Motor neuron (in vitro differentiated cells): ENCODE measurements at regions of chr4 and their contacts with region 1.

Region 1: DNA sequence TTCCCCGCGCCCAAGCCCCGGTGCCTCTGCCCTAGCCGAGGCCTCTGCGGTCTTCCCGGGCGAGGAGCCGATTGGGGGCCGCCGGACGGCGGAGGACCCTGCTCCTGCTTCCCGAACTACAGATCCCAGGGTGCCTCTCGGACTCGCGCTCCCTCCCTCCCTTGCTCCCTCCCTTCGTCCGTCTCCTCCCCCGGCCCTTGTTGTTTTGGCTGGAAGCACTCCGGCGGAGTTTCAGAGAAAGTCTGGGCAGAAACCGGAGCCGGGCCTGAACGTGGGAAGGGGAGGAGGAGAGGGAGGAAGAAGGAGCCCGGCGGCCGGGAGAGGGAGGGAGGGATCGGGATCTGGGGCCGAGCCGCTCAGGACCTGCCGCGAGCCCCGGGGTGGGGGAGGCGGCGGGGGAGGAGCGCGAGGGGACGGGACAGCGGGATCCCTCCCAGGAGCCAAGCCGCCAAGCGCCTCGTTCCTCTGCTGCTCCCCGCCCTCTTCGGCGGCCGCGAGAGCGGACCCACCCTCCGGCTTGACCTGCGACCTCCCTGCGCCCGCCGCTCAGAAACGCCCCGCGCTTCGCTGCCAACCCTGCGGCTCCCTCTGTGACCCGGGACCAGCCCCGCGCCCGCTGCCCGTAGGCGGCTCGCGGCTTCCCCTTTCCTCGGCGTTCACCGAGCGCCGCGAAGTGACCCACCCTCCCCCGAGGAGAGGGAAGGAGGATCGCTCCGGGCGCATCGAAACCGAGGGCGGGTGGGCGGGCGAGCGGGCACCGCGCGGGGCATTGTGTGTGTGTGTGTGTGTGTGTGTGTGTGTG is 496 bp upstream of the GAB1 start:
- ATAC-seq: peak; percentile 71 to 82 (median 78)
- H3K4me3 ChIP-seq: peak overlapping the region; percentile 71 to 97 (median 88)
- H3K27ac ChIP-seq: peak overlapping the region; percentile 41 to 75
- H3K4me1 ChIP-seq: peaks cover 0 to 7% of the 10 kb centered on the region in 2 donors

Region 2: GRCh38 chr4:142615318-142615654 is 720.9 kb before region 1 on chr4:
- in situ Hi-C with region 1: no loop called
- ATAC-seq: no peak
- H3K4me3 ChIP-seq: no peak overlapping the region
- H3K27ac ChIP-seq: no peak overlapping the region
- H3K4me1 ChIP-seq: no peaks in the 10 kb centered on the region

Region 3: GRCh38 chr4:143021384-143021783 is 314.8 kb before region 1 on chr4:
- in situ Hi-C with region 1: no loop called
- ATAC-seq: no peak
- H3K4me3 ChIP-seq: no peak overlapping the region
- H3K27ac ChIP-seq: no peak overlapping the region
- H3K4me1 ChIP-seq: no peaks in the 10 kb centered on the region

Region 4: GRCh38 chr4:143207557-143207956 is 128.6 kb before region 1 on chr4:
- in situ Hi-C with region 1: loop called in 1 of 9 experiments (anchors 25 kb)
- ATAC-seq: peak in 3 of 8 experiments; percentile 32 to 70 (median 33)
- H3K4me3 ChIP-seq: no peak overlapping the region
- H3K27ac ChIP-seq: no peak overlapping the region
- H3K4me1 ChIP-seq: no peaks in the 10 kb centered on the region